ENCODE measurements at regions of chr2 and their contacts with region 1.

Region 1: GRCh38 chr2:30711646-30712085 is 95.6 kb downstream of the CAPN13 start:
- DNase-seq: peak; percentile 80
- ATAC-seq: peak; percentile 71 to 77

Region 2: DNA sequence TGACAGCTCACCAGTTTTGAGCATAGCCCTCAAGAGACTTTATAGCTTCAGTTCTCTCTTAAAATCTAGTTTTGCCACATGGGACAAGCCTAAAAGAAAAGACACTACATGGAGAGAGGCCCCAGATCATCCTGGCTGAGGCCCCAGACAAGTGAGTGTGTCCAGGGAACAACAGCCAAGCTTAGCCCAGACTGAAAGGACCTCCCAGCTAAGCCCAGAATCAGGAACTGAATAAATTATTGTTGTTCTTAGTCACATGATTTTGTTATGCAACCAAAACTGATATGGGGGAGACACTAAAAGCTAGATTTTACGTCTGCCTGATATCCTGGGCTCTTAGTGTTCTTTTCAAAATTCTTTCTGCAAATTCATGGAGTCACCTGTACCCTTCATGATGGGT is 509.7 kb before region 1 on chr2:
- intact Hi-C with region 1: loop called in 1 of 2 experiments (anchors 5 kb)
- DNase-seq: peak; percentile 43
- ATAC-seq: peak; percentile 83 to 89

Region 3: DNA sequence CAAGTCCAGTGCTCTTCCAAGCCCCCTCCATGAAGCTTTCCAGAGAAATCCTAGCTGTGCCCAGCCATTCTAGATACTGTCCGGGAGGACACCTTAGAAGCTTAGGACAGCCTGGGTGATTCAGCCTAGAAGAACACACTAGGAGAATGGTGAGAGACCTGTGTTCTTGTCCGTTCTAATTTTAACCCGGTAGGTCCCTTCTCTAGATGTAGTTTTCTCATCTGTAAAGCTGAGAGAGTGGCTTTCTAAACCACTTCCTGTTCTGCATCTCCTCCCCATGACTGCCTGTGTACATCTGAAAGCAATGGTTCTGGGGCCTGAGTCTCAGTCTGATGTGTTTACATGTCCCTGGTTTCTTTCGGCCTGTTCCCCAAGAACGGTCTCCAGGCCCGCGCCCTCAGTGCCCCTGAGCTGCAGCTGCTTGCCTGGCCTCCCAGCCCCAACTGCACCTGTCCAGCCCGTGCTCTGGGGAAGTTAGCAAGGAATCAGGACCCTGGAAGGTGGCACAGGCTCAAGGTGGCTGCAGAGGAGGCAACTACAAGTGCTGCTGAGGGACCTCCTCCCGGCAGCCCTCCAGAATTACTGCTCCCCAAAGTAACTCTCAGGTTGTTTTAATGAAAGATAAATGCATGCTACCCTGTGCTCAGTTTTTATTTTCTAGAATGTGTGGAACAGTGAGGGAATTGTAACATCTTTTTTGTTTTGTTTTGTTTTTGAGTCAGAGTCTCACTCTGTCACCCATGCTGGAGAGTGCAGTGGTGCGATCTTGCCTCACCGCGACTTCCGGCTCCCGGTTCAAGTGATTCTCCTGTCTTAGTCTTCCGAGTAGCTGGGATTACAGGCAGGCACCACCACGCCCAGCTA is 374.5 kb before region 1 on chr2:
- intact Hi-C with region 1: loop called (anchors 10 kb)
- DNase-seq: no peak
- ATAC-seq: peak in 1 of 2 donors; percentile 16

Region 4: DNA sequence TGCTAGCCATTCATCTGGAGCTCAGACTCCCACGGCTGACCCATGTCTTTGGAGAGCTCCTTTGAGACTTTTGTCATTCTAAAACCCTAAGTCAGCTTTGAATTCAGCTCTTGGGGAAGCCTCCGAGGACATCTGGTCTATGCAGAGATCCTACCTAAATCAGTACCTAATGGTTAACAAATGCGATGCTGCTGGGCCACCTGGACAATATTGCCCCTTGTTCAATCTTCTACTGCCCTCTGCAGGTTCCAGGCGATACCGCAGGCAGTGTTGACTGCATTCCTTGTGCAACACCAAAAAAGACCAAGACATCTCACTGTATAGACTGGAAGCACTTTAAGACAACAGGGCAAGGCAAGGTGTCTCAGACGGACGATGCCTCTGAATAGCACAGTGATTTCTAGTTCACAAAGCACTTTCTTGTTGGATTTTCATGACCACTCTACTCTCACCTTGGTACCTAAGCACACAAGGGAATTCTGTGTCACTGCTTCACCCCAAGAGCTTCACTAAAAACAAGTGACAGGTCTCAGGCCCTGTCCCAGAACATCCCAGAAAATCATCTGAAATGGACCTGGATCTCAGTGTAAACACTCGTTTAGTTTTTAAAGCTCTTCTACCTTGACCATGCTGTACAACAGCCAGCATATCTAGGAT is 622.0 kb after region 1 on chr2:
- intact Hi-C with region 1: loop called (anchors 2 to 5 kb)
- DNase-seq: peak; percentile 78
- ATAC-seq: peak; percentile 66 to 79

Measured in left cardiac atrium (tissue), 4 donors.